ENCODE measurements at regions of chr6 and their contacts with region 1.

Region 1: DNA sequence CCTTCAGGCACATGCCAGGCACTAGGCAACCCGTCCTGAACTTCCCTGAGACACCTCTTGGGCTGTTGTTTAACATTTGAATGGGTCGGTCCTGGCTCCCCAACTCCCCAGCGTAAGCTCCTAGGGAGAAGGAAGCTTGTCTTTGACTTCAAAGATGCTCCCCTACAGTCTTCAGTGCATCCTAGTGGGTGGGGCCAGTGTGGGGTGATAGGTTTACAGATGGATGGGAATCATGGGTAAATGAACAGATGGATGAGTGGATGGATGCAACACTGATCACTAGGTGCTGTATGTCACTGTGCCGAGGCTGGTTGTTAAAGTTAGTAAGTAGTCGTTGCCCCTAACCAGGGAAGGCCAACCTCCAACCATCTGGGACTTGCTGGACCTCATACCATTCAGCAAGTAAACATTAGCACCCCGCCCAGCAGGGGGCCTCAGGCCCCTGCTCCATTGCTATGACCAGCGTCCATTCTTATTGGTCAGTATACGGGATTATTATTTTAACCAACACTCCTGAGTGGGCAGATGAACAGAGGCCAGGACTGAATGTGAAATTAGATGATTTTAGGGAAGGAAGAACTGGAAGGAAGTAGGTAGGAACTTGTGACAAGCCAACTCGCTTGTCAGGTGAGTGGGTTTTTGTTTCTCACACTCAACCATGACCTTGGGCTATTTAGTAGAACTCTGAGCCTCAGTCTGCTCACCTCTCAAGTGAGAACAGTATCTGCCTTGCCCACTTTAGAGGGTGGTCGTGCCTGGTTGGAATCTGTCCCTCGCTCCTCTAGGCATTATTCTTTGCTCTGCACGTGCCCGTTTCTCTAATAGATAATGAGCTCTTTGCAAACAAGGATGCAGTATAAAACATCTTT is 82.9 kb upstream of the FOXP4 start:
- DNase-seq: peak; percentile 75 to 81
- H3K4me3 ChIP-seq: no peak overlapping the region
- H3K27ac ChIP-seq: no peak overlapping the region
- H3K4me1 ChIP-seq: no peaks in the 10 kb centered on the region
- H3K27me3 ChIP-seq: no peaks in the 10 kb centered on the region
- CTCF ChIP-seq: peak; percentile 74 to 83 (median 77)
- POLR2A ChIP-seq: no peak

Region 2: GRCh38 chr6:41591859-41592502 is 128.7 kb after region 1 on chr6:
- intact Hi-C with region 1: loop called (anchors 5 kb)
- DNase-seq: peak; percentile 79 to 81
- H3K4me3 ChIP-seq: no peak overlapping the region
- H3K27ac ChIP-seq: no peak overlapping the region
- H3K4me1 ChIP-seq: no peaks in the 10 kb centered on the region
- H3K27me3 ChIP-seq: no peaks in the 10 kb centered on the region
- CTCF ChIP-seq: peak; percentile 87 to 93 (median 92)
- POLR2A ChIP-seq: no peak

Region 3: DNA sequence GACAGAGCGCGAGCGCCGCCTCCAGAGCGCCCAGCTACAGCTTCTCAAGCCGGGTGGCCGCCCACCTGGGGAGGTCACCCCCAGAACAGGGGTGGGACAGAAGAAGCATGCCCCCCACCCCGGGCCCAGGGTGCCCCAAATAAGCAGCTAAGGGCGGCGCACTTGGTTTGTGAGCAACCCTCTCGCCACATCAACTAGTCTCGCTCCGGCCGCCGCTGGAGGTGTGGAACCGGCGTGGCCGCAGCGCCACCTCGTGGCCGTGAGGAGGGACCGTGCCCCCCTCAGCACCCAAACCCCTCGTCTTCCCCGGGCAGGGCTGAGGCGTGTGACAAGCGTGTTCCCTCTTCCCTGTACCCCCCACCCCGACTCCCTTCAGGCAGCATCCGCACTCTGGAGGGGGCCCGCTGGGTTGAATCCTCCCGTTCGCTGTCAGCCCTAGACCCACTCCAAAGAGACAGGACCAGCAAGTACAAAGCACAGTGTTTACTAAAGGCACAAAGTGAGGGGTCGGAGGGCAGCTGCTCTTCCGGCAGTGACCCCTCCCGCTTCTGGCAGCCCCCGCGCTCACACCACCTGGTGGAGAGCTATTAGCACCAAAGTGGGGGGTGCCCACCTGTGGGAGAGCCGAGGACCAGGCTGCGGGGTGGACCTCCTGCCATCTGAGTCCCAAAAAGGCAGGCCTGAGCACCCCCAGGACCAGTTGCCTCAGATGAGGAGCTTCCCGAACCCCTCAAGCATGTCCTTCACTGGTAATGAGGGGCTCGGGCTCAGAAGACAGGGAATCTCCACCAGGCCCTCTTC is 220.4 kb after region 1 on chr6:
- intact Hi-C with region 1: loop called (anchors 10 kb)
- DNase-seq: peak; percentile 75 to 79
- H3K4me3 ChIP-seq: peak overlapping the region; percentile 29 to 49
- H3K27ac ChIP-seq: peak overlapping the region; percentile 49 to 79
- H3K4me1 ChIP-seq: peaks cover 0 to 12% of the 10 kb centered on the region in 2 donors
- H3K27me3 ChIP-seq: no peaks in the 10 kb centered on the region
- CTCF ChIP-seq: peak; percentile 88 to 97 (median 91)
- POLR2A ChIP-seq: peak in 1 of 2 donors; percentile 25

Measured in uterus (tissue), 4 donors.